ENCODE measurements at regions of chr15 and their contacts with region 1.

Region 1: DNA sequence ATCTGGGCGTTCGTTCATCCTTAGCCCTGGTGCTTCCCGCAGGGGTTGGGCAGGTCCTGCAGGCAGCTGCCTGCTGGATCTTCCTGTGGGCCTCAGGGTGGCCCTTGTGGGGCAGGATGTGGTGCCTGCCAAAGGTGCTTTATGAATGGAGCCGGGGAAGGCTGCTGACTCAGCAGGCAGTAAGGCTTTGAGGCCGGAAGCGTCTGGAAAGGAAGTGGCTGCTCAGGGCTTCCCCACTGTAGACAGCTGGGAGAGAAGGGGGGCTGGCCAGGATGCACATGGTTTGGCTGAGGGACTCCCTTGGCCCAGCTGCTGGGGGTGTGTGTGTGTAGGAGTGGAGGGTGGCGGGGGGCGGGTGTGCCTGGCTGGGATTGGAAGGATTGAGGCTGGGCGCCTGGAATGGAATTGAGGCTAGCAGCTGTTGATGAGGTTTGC is 12.9 kb downstream of the CD276 start:
- DNase-seq: peak; percentile 44
- H3K4me3 ChIP-seq: no peak overlapping the region
- CTCF ChIP-seq: no peak

Region 2: DNA sequence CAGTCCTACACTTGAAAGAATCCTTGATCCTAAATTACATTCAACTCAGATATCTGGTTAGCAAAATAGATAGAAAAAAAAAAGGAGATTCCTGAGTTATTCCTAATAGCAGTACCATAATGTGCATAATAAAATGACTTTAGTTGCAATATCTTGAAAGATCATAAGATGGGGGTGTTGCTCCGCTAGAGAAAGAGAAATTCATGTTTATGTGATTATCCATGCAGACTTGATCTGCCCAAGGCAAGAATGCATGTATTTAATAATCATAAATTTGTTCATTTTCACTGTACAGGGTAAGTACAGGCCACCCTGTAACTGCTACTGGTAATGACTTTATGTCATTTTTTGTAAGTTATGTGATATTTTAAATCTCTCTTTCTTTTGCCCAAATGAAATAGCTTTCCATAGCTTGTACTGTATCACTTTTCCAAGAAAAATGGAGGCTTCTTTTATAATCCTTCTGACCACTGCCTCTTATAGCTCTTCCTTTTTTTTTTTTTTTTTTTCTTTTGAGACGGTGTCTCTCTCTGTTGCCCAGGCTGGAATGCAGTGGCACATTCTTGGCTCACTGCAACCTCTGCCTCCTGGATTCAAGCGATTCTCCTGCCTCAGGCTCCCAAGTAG is 412.8 kb before region 1 on chr15:
- CTCF ChIA-PET with region 1: interaction called, 27 read pairs
- POLR2A ChIA-PET with region 1: no interaction called
- DNase-seq: no peak
- H3K4me3 ChIP-seq: no peak overlapping the region
- CTCF ChIP-seq: peak; percentile 27

Region 3: DNA sequence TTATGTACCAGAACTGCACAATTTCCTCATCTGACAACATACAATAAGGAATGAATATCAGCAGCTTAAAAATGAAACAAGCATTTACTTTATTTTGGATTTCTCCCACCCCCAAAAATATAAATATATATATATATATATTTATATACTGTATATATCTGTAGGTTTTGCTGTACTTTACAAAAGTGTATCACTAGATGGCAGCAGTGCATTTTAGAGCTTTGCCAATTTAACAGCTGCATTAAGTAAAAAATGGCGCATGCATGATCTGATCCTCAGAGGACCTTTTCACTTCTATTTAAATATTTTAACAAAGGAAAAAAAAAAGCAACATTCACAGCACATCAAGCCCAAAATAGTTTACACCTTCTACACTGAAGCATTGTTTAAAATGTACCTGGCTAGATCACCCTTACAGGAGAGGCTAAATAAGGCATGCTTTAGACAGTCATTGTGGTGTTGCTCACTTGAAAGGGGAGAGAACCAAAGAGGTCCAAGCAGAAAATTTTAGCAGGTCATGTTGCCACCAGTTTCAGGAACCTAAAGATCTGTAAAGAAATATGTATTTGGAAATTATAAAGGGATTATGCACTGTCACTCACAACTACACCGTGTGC is 136.4 kb before region 1 on chr15:
- CTCF ChIA-PET with region 1: interaction called, 214 read pairs
- POLR2A ChIA-PET with region 1: no interaction called
- DNase-seq: peak; percentile 23
- H3K4me3 ChIP-seq: no peak overlapping the region
- CTCF ChIP-seq: peak; percentile 32

Region 4: GRCh38 chr15:73608941-73609340 is 88.1 kb before region 1 on chr15:
- CTCF ChIA-PET with region 1: interaction called, 19 read pairs
- POLR2A ChIA-PET with region 1: no interaction called
- DNase-seq: no peak
- H3K4me3 ChIP-seq: no peak overlapping the region
- CTCF ChIP-seq: no peak

Region 5: DNA sequence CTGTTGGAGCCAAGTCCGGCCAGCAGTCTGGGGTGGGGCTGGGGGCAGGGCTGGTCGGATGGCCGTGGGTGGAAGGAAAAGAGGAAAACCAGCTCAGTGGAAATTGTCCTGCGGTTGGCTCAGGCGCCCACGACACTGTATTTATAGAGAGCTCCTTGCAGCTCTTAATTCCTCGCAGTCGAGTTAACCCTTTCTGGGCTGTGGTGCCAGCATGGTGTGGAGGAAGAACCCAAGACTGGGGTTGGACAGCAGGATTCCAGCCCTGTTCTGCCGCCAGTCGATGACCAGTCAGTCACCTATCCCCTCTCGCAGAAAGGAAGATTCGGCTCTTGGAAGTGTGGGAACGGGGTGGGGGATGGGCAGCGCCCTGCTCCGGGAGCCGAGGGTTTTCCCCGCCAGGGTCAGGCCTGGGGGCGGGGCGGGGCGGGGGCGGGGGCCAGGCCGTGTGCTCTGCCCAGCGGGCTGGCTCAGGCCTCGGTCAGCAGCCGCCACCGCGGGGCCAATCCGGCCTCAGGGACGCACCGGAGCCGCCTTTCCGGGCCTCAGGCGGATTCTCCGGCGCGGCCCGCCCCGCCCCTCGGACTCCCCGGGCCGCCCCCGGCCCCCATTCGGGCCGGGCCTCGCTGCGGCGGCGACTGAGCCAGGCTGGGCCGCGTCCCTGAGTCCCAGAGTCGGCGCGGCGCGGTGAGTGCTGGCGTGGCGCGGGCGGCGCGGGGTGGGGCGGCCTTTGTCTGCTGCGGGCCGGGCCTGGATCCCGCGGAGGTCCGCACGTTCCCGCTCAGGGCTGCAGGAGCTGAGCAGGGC is 13.1 kb before region 1 on chr15 and contains the start of gene CD276:
- CTCF ChIA-PET with region 1: interaction called, 378 read pairs
- POLR2A ChIA-PET with region 1: interaction called, 11 read pairs
- DNase-seq: no peak
- H3K4me3 ChIP-seq: peak within 1 kb of the TSS; percentile 85
- CTCF ChIP-seq: no peak

Region 6: DNA sequence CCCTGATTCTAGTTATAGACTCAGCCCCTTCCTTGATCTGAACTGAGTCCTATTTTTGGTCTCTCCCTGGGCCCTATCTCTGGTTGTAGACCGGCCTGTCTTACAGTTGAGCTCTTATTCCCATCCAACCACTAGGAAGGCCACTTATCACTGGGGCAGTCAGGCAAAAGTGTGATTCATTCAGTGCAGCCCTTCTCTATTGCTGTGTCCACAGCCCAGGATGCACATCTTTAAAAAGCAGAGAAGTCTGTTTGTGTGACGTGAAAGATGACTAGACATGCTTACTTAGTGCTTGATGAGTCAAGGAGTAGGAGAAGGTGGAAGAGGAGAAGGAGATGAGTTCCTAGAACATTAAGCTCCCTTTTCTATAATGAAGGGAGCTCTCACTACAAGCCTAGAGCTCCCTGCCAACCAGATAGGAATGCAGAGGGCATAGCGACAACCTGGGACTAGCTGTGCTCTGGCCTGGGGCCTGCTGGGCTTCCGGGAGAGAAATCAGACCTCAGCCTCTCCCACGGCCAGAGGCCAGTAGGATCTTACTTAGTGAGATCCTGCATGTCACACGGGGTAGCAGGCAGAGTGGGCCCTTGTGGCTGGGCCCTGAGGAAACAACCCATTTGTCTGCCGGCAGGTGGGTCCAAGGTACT is 30.4 kb after region 1 on chr15:
- CTCF ChIA-PET with region 1: interaction called, 15 read pairs
- POLR2A ChIA-PET with region 1: no interaction called
- DNase-seq: peak; percentile 62
- H3K4me3 ChIP-seq: no peak overlapping the region
- CTCF ChIP-seq: no peak

Region 7: DNA sequence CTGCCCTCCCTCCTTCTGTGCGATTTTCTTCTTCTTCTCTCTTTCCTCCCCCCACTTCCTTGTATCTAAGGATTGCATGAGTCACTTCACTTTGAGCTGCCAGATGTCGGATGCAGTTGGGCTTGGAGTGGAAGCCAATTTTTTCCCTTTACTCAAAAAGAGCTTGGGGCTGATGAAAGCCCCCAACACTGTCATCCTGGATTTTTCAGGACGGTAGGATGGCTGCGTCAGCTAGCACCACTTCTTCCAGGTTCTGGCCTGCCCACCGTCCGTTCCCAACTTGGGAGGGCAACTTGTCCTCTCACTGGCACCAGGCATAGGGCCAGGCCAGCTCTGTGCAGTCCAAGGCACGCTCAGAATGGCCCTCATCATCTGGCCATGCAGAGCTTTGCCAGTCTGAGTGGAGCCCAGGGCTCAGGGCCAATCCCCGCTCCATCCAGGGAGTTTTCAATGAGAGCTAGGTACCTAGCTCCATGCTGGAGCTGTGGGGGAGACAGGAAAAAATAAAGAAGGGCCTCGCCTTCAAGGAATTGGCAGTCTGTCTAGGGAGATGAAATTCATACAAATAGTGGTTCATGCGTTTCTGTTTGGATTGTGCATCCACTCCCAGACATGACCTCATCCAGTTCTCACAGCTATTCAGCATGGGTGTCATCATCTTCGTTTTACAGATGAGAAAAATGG is 103.8 kb after region 1 on chr15:
- CTCF ChIA-PET with region 1: no interaction called
- POLR2A ChIA-PET with region 1: no interaction called
- DNase-seq: peak; percentile 50
- H3K4me3 ChIP-seq: no peak overlapping the region; the same call in 1 of the 2 replicates
- CTCF ChIP-seq: no peak

Region 8: GRCh38 chr15:73832657-73833056 is 135.6 kb after region 1 on chr15:
- CTCF ChIA-PET with region 1: no interaction called
- POLR2A ChIA-PET with region 1: no interaction called
- DNase-seq: no peak
- H3K4me3 ChIP-seq: no peak overlapping the region
- CTCF ChIP-seq: no peak

Region 9: DNA sequence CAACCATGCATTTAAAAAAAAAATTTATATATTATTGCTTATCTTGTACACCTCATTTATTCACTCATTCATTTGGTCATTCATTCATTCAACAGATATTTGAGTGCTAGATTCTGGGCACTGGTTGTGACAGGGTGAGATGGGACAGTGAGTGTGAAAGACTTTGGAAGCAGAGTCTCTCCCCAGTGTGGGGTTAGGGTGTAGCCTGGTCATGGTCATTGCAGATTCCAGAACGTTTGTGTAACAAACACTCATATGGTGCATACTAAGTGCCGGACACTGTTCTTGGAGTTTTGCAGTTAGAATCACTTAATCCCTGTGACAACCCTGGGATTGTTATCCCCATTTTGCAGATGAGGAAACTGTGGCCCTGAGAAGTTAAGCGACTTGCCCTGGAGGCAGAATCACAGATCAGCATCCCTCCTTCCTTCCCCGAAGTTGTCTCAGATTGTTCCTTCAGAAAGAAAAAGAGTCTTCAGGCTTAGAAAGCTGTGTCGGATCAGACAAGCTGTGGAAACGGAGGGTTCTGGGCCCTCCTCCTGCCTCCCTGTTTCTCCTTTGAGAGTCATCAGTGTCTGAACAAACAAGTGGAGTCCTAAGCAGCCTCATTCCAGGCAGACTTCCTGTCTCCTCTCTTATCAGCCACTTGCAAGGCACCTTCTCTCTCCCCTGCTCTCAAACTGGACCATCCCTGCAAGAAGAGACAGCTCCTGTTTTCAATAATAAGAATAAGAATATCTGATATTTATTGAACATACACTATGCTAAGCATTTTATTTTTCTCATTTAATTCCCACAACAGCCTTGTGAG is 235.5 kb after region 1 on chr15:
- CTCF ChIA-PET with region 1: no interaction called
- POLR2A ChIA-PET with region 1: no interaction called
- DNase-seq: no peak
- H3K4me3 ChIP-seq: no peak overlapping the region
- CTCF ChIP-seq: no peak

Measured in AG04449 (cell line).